Activated CD4-positive, alpha-beta T cell treated with anti-CD3 and anti-CD28 coated beads, Interleukin-2, amount 10 ng/mL, durations not matched to agents 24 days and 14 days (primary cell): ENCODE measurements at regions of chr5 and their contacts with region 1.

Region 1: GRCh38 chr5:128083033-128083810 is at the start of gene SLC12A2:
- DNase-seq: peak; percentile 97
- H3K4me3 Mint-ChIP-seq: peak within 1 kb of the TSS; percentile 93
- H3K27ac Mint-ChIP-seq: peak within 1 kb of the TSS; percentile 98
- H3K4me1 Mint-ChIP-seq: peaks cover 54% of the 10 kb centered on the region
- H3K27me3 Mint-ChIP-seq: no peaks in the 10 kb centered on the region
- total RNA-seq, gene SLC12A2: 24.4 and 24.5 TPM in 2 replicates

Region 2: DNA sequence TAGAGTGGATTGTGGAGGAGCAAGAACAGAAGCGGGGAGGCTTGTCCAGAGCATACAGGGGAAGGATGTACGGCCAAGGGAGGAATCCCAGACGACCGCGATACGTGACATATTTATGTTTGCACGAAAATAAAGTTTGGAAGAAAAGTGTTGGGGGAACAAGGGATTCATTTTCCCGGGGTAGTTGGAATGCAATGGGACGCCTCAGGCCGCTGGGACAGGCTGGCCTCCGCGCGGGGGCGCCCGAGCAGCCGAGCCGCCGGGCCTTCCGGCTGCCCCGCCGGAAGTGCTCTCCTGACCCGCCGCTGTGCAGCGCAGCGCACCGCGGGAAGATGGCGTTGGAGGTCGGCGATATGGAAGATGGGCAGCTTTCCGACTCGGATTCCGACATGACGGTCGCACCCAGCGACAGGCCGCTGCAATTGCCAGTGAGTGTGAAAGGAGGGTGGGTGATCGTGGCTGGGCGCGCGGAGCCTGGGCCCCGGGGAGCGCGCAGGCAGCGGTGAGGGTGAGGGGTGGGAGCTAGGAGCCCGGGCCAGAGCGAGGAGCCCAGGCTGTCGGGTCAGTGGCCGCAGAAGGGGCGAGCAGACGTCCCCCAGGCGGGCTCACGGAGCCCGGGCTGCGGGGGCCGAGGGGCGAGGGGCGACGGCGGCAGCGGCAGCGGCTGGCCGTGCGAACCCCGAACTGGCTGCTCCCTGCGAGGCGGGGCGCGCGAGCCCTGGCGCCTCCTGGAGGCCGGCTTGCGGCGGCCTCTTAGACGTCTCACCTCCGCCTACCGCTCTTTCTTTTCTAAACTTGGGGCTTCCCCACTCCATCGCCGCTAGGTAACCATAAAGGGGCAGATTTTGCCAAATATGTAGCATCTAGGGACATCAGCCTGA is 1482.4 kb before region 1 on chr5 and contains the start of gene PHAX:
- intact Hi-C with region 1: loop called (anchors 5 kb)
- DNase-seq: peak; percentile 94
- H3K4me3 Mint-ChIP-seq: peak within 1 kb of the TSS; percentile 96
- H3K27ac Mint-ChIP-seq: peak within 1 kb of the TSS; percentile 98
- H3K4me1 Mint-ChIP-seq: peaks cover 24% of the 10 kb centered on the region
- H3K27me3 Mint-ChIP-seq: peaks cover 11% of the 10 kb centered on the region
- total RNA-seq, gene PHAX: 50.2 and 51.7 TPM in 2 replicates

Region 3: DNA sequence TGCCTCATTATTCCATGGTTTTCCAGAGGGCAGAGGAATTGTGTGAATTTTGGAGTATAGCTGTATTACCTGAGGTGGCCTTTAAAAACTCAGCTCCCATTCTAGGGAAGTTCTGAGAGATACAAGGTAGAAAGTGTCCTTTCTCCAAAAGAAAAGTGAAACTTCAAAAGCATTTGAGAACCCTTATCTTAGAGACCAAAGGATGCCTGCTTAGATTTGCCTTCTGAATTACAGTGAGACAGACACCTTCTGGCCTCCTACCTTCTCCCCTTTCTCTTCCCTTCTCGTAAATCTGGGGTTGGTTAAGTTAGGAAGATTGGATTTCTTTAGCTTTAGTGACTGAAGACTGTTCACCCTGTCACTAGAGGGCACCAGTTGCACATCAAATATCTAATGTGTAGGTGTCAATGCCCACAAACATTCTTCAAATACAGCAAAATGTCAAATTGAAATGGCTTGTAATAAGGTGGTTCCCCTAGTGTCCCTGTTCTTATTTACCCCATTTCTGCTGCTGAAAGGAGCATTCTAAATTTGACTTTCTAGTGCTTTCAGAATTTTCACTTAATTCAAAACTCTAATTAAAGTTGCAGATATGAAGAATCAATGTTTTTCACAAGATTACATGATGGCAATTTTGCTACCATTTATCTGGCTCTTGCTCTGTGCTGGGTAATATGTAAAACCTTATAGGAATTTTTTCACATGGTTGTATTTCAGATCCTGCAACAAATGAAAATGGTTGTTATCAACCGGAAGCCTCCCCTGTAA is 519.0 kb before region 1 on chr5:
- intact Hi-C with region 1: loop called (anchors 10 kb)
- DNase-seq: peak; percentile 83
- H3K4me3 Mint-ChIP-seq: no peak overlapping the region
- H3K27ac Mint-ChIP-seq: no peak overlapping the region
- H3K4me1 Mint-ChIP-seq: peaks cover 8% of the 10 kb centered on the region
- H3K27me3 Mint-ChIP-seq: peaks cover 25% of the 10 kb centered on the region

Region 4: GRCh38 chr5:127785098-127785927 is 297.9 kb before region 1 on chr5:
- intact Hi-C with region 1: loop called (anchors 1 kb)
- DNase-seq: peak; percentile 87
- H3K4me3 Mint-ChIP-seq: peak overlapping the region; percentile 58
- H3K27ac Mint-ChIP-seq: peak overlapping the region; percentile 92
- H3K4me1 Mint-ChIP-seq: peaks cover 29% of the 10 kb centered on the region
- H3K27me3 Mint-ChIP-seq: no peaks in the 10 kb centered on the region

Region 5: GRCh38 chr5:128053291-128053954 is 29.8 kb before region 1 on chr5:
- intact Hi-C with region 1: no loop called
- DNase-seq: no peak
- H3K4me3 Mint-ChIP-seq: no peak overlapping the region
- H3K27ac Mint-ChIP-seq: no peak overlapping the region
- H3K4me1 Mint-ChIP-seq: no peaks in the 10 kb centered on the region
- H3K27me3 Mint-ChIP-seq: no peaks in the 10 kb centered on the region

Region 6: GRCh38 chr5:128201065-128201926 is 118.1 kb after region 1 on chr5:
- intact Hi-C with region 1: loop called (anchors 2 kb)
- DNase-seq: peak; percentile 96
- H3K4me3 Mint-ChIP-seq: peak overlapping the region; percentile 60
- H3K27ac Mint-ChIP-seq: no peak overlapping the region
- H3K4me1 Mint-ChIP-seq: peaks cover 18% of the 10 kb centered on the region
- H3K27me3 Mint-ChIP-seq: peaks cover 5% of the 10 kb centered on the region